ENCODE measurements at regions of chr10 and their contacts with region 1.

Region 1: DNA sequence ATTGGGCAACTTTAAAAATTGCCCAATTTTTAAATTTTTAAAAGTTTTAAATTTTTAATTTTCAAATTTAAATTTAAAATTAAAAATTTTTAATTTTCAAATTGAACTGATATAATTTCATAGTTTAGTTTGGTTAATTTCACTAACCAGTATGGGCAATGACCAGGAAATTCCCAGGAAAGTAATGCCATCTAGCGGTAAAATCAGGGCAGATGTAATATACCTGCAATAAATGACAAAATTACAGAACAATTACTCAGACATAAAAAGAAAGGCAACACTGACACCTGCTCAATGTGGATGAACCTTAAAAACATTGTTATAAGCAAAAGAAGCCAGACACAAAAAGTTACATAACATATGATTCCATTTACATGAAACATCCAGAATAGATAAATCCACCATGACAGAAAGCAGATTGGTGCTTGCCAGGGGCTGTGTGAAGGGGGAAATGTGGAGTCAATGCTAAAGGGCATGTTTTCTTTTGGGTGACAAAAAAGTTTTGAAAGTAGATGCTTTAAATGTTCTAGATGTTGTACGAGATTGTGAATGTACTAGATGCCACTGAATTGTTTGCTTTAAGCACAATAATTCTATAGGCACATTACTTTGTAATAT is 28.6 kb upstream of the SLC16A12 start:
- DNase-seq: no peak
- H3K4me3 ChIP-seq: no peak overlapping the region
- H3K27me3 ChIP-seq: no peaks in the 10 kb centered on the region; the same call in 1 of the 2 replicates
- CTCF ChIP-seq: peak; percentile 64

Region 2: GRCh38 chr10:89158446-89158845 is 405.5 kb before region 1 on chr10:
- CTCF ChIA-PET with region 1: no interaction called
- POLR2A ChIA-PET with region 1: no interaction called
- DNase-seq: peak; percentile 99
- H3K4me3 ChIP-seq: no peak overlapping the region
- H3K27me3 ChIP-seq: no peaks in the 10 kb centered on the region
- CTCF ChIP-seq: no peak

Region 3: GRCh38 chr10:89426230-89426868 is 137.6 kb before region 1 on chr10:
- CTCF ChIA-PET with region 1: interaction called, 23 read pairs
- POLR2A ChIA-PET with region 1: no interaction called
- DNase-seq: no peak
- H3K4me3 ChIP-seq: no peak overlapping the region
- H3K27me3 ChIP-seq: no peaks in the 10 kb centered on the region
- CTCF ChIP-seq: peak; percentile 72

Region 4: DNA sequence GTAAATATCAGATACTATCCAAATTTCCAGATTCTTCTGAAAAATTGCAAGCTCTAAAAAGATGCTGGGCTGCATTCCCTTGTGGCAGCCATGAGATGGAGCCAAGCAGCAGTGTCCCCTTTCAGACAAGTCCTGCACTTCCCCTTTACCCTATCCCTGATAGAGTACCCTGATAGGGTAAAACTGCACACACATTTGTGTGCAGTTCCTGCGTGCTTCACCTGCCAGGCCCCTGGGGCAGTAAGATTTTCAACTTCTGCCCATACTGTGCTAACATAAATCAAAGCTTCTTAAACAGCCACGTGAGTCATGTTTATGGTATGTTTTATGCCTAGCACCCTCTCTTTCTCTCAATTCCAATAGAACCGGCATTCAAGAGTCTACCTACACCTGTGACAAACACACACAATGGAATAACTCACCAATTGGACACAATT is 97.4 kb before region 1 on chr10:
- CTCF ChIA-PET with region 1: interaction called, 13 read pairs
- POLR2A ChIA-PET with region 1: no interaction called
- DNase-seq: no peak
- H3K4me3 ChIP-seq: no peak overlapping the region
- H3K27me3 ChIP-seq: no peaks in the 10 kb centered on the region
- CTCF ChIP-seq: peak; percentile 67

Region 5: GRCh38 chr10:89543841-89544240 is 20.1 kb before region 1 on chr10:
- CTCF ChIA-PET with region 1: no interaction called
- POLR2A ChIA-PET with region 1: no interaction called
- DNase-seq: no peak
- H3K4me3 ChIP-seq: no peak overlapping the region
- H3K27me3 ChIP-seq: no peaks in the 10 kb centered on the region; the same call in 1 of the 2 replicates
- CTCF ChIP-seq: no peak

Measured in BJ (cell line).